BJ (cell line): ENCODE measurements at regions of chr20 and their contacts with region 1.

Region 1: GRCh38 chr20:9989066-9989724 is 45.6 kb upstream of the ANKEF1 start:
- DNase-seq: peak; percentile 19
- H3K4me3 ChIP-seq: no peak overlapping the region
- H3K27me3 ChIP-seq: no peaks in the 10 kb centered on the region
- CTCF ChIP-seq: no peak

Region 2: GRCh38 chr20:10376270-10377075 is 387.3 kb after region 1 on chr20:
- CTCF ChIA-PET with region 1: no interaction called
- POLR2A ChIA-PET with region 1: interaction called, 10 read pairs
- DNase-seq: peak; percentile 17
- H3K4me3 ChIP-seq: no peak overlapping the region
- H3K27me3 ChIP-seq: no peaks in the 10 kb centered on the region
- CTCF ChIP-seq: no peak